Activated T-helper 2 cell treated with anti-CD3 and anti-CD28 coated beads, Interferon-gamma antibody, Interleukin-2, Interleukin-4, amounts not matched to agents 10 μg/mL and 5 μg/mL and 100 μg/mL, durations not matched to agents 14 hours and 24 hours and 36 hours (primary cell): ENCODE measurements at regions of chr7 and their contacts with region 1.

Region 1: GRCh38 chr7:127858091-127858914 is 172.9 kb downstream of the LRRC4 start:
- DNase-seq: no peak
- H3K4me3 Mint-ChIP-seq: no peak overlapping the region
- H3K27ac Mint-ChIP-seq: peak overlapping the region; percentile 15
- H3K4me1 Mint-ChIP-seq: peaks cover 46% of the 10 kb centered on the region
- H3K27me3 Mint-ChIP-seq: no peaks in the 10 kb centered on the region

Region 2: GRCh38 chr7:127776776-127777386 is 81.4 kb before region 1 on chr7:
- intact Hi-C with region 1: no loop called
- DNase-seq: no peak
- H3K4me3 Mint-ChIP-seq: no peak overlapping the region
- H3K27ac Mint-ChIP-seq: no peak overlapping the region
- H3K4me1 Mint-ChIP-seq: peaks cover 5% of the 10 kb centered on the region
- H3K27me3 Mint-ChIP-seq: no peaks in the 10 kb centered on the region

Region 3: DNA sequence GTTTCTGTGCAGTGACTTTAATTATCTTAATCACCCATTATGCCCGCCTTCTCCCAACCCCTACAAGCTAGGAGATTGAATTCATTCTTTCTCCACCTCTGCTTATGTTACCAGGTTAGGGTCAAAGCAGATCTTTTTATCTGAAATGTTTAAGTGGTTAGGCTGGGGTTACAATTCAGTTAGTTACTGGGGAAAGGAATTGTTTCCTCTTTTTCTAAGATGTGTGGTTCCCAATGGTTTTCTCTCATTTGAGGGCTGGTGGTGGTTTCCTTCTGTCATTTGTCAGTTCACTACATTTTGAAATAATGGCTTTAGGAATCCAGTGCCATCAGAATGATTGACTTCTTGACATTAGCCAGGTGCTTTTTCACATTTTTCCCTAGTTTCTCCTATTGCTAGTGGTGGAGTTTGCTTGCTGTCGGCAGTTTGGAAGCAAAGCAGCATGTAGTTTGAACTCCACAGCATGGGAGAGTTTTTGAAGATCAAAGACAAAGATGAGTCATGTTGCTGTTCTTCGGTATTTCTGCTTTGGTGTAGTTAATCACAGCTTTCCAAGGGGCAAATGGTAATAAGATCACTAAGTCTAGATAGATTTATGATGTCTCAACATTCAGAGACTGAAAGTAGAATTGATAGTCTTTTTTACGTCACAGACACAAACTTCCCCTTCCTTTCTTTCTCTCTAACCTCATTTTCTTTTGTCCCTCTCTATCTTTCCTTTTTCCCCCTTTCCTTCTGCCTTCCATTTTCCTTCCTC is 38.1 kb before region 1 on chr7:
- intact Hi-C with region 1: loop called (anchors 2 kb)
- DNase-seq: no peak
- H3K4me3 Mint-ChIP-seq: no peak overlapping the region
- H3K27ac Mint-ChIP-seq: peak overlapping the region; percentile 70
- H3K4me1 Mint-ChIP-seq: peaks cover 41% of the 10 kb centered on the region
- H3K27me3 Mint-ChIP-seq: no peaks in the 10 kb centered on the region

Region 4: DNA sequence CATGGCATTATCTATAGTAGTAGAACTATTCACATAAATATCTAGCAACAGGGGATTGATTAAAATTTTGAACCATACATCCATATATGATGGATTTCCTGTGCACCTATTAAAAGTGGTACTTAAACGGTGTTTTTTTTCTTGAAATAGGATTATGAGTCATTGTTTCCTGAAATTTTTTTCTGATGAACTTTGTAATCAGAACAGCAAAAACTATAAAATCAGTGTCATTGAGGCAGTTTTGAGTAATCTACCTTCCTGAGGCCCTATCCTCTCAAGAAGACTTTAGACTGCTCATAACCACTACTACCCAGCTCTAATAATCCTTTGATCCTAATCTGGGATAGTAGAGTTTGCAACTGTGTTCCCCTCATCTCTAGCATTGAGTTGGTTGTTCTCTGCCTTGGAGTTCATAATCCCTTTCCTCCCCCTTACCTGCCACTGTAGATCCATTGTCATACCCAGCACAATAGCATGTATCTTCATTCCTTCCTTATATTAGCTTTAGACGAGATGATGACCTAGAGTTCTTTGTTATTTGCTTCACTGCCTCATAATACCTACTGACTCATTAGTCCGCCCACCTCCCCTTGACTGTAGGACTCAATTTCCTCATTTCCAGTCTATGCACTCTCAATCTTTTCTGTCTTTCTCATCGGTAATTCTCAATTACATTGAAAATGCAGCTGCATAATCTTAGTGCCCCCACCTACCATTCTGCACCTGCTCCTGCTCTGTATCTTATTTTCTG is 39.6 kb after region 1 on chr7:
- intact Hi-C with region 1: loop called (anchors 1 kb)
- DNase-seq: no peak
- H3K4me3 Mint-ChIP-seq: no peak overlapping the region
- H3K27ac Mint-ChIP-seq: no peak overlapping the region
- H3K4me1 Mint-ChIP-seq: peaks cover 20% of the 10 kb centered on the region
- H3K27me3 Mint-ChIP-seq: no peaks in the 10 kb centered on the region

Region 5: GRCh38 chr7:128031901-128032604 is 173.8 kb after region 1 on chr7:
- intact Hi-C with region 1: loop called (anchors 5 kb)
- DNase-seq: peak; percentile 31
- H3K4me3 Mint-ChIP-seq: peak overlapping the region; percentile 78
- H3K27ac Mint-ChIP-seq: no peak overlapping the region
- H3K4me1 Mint-ChIP-seq: peaks cover 3% of the 10 kb centered on the region
- H3K27me3 Mint-ChIP-seq: peaks cover 20% of the 10 kb centered on the region

Region 6: GRCh38 chr7:128155100-128155740 is 296.9 kb after region 1 on chr7:
- intact Hi-C with region 1: no loop called
- DNase-seq: no peak
- H3K4me3 Mint-ChIP-seq: no peak overlapping the region
- H3K27ac Mint-ChIP-seq: no peak overlapping the region
- H3K4me1 Mint-ChIP-seq: no peaks in the 10 kb centered on the region
- H3K27me3 Mint-ChIP-seq: peaks cover 32% of the 10 kb centered on the region